ENCODE measurements at regions of chr6 and their contacts with region 1.

Region 1: GRCh38 chr6:63923139-63923739 is 287.6 kb downstream of the PHF3 start:
- DNase-seq: peak; percentile 56
- H3K4me3 ChIP-seq: no peak overlapping the region
- H3K27ac ChIP-seq: no peak overlapping the region
- H3K4me1 ChIP-seq: no peaks in the 10 kb centered on the region
- CTCF ChIP-seq: peak; percentile 86

Region 2: DNA sequence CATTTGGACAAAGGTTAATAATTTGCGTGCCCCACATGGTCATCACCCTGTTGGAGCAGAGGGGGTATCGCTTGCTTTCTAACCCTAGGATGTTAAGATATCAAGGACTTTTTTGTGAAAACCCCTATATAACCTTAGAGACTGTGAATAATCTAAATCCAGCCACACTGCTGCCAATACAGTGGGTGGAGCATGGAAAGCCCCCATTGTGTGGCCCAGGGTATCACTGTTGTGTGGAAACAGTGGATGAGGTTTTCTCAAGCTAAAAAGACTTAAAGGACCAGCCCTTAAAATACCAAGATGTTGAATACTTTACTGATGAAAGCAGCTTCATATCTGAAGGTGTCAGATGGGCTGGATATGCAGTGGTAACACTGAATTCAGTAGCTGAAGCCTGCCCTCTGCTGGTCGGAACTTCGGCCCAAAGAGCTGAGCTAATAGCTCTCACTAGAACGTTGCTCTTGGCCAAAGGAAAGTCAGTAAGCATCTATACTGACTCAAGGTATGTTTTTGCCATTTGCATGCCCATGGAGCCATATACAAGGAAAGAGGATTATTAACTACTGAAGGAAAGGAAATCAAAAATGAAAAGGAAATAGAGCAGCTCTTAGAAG is 407.6 kb after region 1 on chr6:
- CTCF ChIA-PET with region 1: no interaction called
- POLR2A ChIA-PET with region 1: no interaction called
- intact Hi-C with region 1: loop called (anchors 2 kb)
- DNase-seq: peak; percentile 50
- H3K4me3 ChIP-seq: no peak overlapping the region
- H3K27ac ChIP-seq: no peak overlapping the region
- H3K4me1 ChIP-seq: no peaks in the 10 kb centered on the region
- CTCF ChIP-seq: peak; percentile 85

Measured in OCI-LY7 (cell line).